ENCODE measurements at regions of chr3 and their contacts with region 1.

Region 1: GRCh38 chr3:132416807-132417694 is at the start of gene DNAJC13:
- DNase-seq: peak; percentile 95
- ATAC-seq: peak; percentile 94
- H3K4me3 Mint-ChIP-seq: peak within 1 kb of the TSS; percentile 87
- H3K27ac Mint-ChIP-seq: peak within 1 kb of the TSS; percentile 94
- H3K4me1 Mint-ChIP-seq: peaks cover 37% of the 10 kb centered on the region
- H3K27me3 Mint-ChIP-seq: no peaks in the 10 kb centered on the region
- total RNA-seq, gene DNAJC13: 29.9 to 33.5 TPM

Region 2: GRCh38 chr3:131381444-131382291 is 1035.4 kb before region 1 on chr3 and contains the start of gene NUDT16:
- CTCF ChIA-PET with region 1: no interaction called
- POLR2A ChIA-PET with region 1: no interaction called
- intact Hi-C with region 1: loop called in 1 of 2 experiments (anchors 2 kb)
- DNase-seq: peak; percentile 98
- ATAC-seq: peak; percentile 100
- H3K4me3 Mint-ChIP-seq: peak within 1 kb of the TSS; percentile 90
- H3K27ac Mint-ChIP-seq: peak within 1 kb of the TSS; percentile 91
- H3K4me1 Mint-ChIP-seq: peaks cover 22% of the 10 kb centered on the region
- H3K27me3 Mint-ChIP-seq: no peaks in the 10 kb centered on the region
- total RNA-seq, gene NUDT16: 4.0 to 5.7 TPM

Region 3: DNA sequence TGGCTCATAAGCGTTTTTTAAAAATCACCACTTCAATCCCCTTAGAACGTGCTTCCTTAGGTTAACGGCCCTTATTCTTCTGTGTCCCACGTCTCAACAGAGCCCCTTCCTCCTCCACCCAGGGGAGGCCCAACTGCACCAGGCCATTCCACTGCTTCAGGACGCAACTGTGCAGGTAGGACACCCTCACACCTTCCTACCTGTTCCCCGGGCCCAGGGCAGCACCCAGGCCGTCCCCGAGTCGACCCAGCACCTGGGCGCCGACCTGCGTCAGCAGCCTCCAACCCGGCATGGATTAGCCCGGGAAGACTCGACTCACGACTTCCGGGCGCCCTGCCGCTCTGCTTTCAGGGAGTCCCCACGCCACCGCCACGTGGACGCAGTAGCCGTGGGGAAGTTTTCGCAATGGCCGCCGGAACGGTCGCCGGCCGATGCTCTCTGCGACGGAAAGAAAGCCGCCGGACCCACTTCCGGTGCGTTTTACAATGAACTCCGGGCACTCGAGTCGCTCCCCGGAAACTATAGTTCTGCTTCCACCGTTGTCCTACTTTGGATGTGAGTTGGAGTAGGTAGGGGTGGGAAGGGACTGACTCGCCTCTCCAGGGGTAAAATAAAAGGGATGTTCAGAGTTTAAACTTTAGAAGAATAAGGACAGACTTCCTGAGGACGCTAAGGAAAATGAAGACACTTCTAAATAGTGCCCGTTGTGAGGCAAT is 914.4 kb before region 1 on chr3 and contains the start of gene MRPL3:
- CTCF ChIA-PET with region 1: no interaction called
- POLR2A ChIA-PET with region 1: no interaction called
- intact Hi-C with region 1: loop called in 1 of 2 experiments (anchors 2 kb)
- DNase-seq: peak; percentile 92
- ATAC-seq: peak; percentile 97
- H3K4me3 Mint-ChIP-seq: peak within 1 kb of the TSS; percentile 98
- H3K27ac Mint-ChIP-seq: peak within 1 kb of the TSS; percentile 93
- H3K4me1 Mint-ChIP-seq: peaks cover 33% of the 10 kb centered on the region
- H3K27me3 Mint-ChIP-seq: no peaks in the 10 kb centered on the region
- total RNA-seq, gene MRPL3: 166 to 278 TPM

Region 4: DNA sequence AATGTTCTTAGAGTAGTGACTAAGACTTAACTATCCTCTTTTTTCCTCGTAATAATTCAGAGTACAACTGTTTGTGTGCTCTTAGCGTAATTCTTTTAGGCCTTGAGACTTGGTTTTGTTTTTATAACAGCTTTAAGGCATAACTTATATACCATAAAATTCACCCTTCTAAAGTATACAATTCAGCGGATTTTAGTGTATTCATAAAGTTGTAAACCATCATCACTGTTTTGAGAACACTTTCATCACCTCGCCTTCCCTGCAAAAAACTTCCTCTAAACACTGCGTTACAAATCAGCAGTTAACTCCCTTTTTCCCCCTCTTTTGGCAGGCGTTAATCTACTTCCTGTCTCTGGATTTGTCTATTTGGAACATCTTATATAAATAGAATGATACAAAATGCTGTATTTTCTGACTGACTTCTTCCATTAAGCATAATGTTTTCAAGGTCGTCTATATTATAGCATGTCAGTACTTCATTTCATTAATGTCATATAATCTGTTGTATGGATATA is 18.9 kb after region 1 on chr3:
- CTCF ChIA-PET with region 1: interaction called, 4 read pairs
- POLR2A ChIA-PET with region 1: no interaction called
- intact Hi-C with region 1: loop called in 1 of 2 experiments (anchors 2 kb)
- DNase-seq: no peak
- ATAC-seq: no peak
- H3K4me3 Mint-ChIP-seq: no peak overlapping the region
- H3K27ac Mint-ChIP-seq: peak overlapping the region; percentile 26
- H3K4me1 Mint-ChIP-seq: peaks cover 35% of the 10 kb centered on the region
- H3K27me3 Mint-ChIP-seq: no peaks in the 10 kb centered on the region

Region 5: GRCh38 chr3:132659365-132660051 is 242.5 kb after region 1 on chr3 and contains the start of gene ACAD11:
- CTCF ChIA-PET with region 1: interaction called, 3 read pairs
- POLR2A ChIA-PET with region 1: no interaction called
- intact Hi-C with region 1: loop called (anchors 1 to 10 kb)
- DNase-seq: peak; percentile 66
- ATAC-seq: peak; percentile 36
- H3K4me3 Mint-ChIP-seq: peak within 1 kb of the TSS; percentile 96
- H3K27ac Mint-ChIP-seq: peak within 1 kb of the TSS; percentile 98
- H3K4me1 Mint-ChIP-seq: peaks cover 51% of the 10 kb centered on the region
- H3K27me3 Mint-ChIP-seq: no peaks in the 10 kb centered on the region
- total RNA-seq, gene ACAD11: 16.1 to 16.9 TPM

Region 6: GRCh38 chr3:133661454-133662277 is 1244.6 kb after region 1 on chr3 and contains the start of gene TOPBP1:
- CTCF ChIA-PET with region 1: no interaction called
- POLR2A ChIA-PET with region 1: no interaction called
- intact Hi-C with region 1: loop called (anchors 5 kb)
- DNase-seq: peak; percentile 94
- ATAC-seq: peak; percentile 85
- H3K4me3 Mint-ChIP-seq: peak within 1 kb of the TSS; percentile 91
- H3K27ac Mint-ChIP-seq: peak within 1 kb of the TSS; percentile 98
- H3K4me1 Mint-ChIP-seq: peaks cover 33% of the 10 kb centered on the region
- H3K27me3 Mint-ChIP-seq: no peaks in the 10 kb centered on the region
- total RNA-seq, gene TOPBP1: 80.9 to 94.6 TPM

Measured in activated CD4-positive, alpha-beta T cell treated with anti-CD3 and anti-CD28 coated beads for 36 hours (primary cell).